ENCODE measurements at regions of chr13 and their contacts with region 1.

Region 1: DNA sequence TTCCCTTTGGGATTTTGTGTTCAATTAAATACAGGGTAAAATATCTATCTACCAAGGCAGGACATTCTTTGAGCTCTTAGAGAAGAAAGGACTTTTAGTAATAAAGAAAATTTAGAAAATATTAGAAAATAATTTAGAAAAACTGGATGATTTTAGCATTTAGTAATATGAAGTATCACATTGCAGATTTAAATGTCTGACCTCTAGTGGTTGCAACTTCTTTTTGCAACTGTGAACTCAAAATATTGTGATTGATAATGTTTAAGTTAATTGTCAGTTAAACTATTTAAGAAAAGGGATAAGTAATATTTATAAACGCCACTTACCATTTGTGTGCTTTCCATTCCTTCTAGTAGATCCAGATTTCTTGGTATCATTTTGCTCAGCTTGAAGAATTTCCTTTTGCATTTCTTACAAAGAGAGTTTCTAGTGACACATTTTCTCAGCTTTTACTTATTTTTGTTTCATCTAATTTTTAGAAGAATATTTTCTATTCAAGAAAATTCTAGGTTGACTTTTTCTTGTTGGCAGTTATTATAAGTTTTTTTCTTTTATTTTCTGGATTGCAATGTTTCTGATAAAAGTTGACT is 10.3 kb upstream of the POSTN start:
- DNase-seq: no peak
- H3K4me3 ChIP-seq: no peak overlapping the region
- CTCF ChIP-seq: peak; percentile 29

Region 2: DNA sequence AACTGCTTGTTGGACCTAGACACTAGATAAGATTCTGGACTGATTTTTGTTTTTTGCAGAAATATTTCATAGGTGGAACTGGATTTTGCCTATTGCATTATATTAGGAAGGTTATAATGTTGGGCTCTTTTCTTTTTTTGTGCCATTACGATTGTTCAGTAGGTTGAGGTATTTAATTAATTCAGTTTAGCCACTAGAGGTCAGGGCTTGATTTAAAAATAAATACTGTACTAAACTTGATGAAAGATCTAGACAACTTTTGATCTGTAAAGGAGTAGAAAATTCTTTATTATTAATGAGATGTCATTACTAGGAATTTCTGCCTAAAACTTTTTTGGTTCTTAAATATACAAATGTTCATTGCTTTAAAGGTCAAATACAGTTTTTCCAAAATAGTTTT is 534.1 kb before region 1 on chr13:
- CTCF ChIA-PET with region 1: interaction called, 81 read pairs
- POLR2A ChIA-PET with region 1: no interaction called
- DNase-seq: no peak
- H3K4me3 ChIP-seq: no peak overlapping the region
- CTCF ChIP-seq: no peak

Region 3: DNA sequence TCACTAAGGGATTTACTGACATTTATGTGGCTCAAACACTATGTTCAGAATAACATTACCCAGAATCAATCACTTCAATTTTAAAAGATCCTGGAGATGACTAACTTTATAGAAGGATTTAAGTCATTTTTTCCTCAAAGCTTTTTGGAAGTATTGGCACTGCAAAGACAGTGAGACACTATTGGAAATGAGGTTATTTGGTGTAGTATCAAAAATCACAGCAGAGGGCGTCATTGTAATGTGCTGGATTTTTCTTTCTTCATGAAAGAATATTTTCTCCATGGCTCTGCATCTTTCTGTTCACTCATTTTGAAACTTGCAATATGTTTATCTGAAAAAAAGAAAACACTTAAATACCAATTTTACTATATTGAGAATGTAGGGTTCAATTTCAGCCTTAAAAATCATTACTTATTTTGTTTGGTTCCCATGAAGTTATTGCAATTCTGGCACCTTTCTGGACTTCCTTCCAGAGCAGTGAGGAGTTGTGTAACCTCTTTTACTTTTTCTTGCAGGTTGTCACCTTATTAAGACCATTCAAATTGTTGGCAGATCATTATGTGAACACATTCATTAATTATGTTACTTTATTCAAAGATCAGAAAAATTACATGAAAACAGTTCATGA is 499.7 kb before region 1 on chr13:
- CTCF ChIA-PET with region 1: interaction called, 89 read pairs
- POLR2A ChIA-PET with region 1: no interaction called
- DNase-seq: no peak
- H3K4me3 ChIP-seq: no peak overlapping the region
- CTCF ChIP-seq: peak; percentile 45

Region 4: GRCh38 chr13:37382146-37382545 is 226.7 kb before region 1 on chr13:
- CTCF ChIA-PET with region 1: no interaction called
- POLR2A ChIA-PET with region 1: no interaction called
- DNase-seq: no peak
- H3K4me3 ChIP-seq: no peak overlapping the region
- CTCF ChIP-seq: no peak

Measured in AG04449 (cell line).